ENCODE measurements at regions of chr19 and their contacts with region 1.

Region 1: DNA sequence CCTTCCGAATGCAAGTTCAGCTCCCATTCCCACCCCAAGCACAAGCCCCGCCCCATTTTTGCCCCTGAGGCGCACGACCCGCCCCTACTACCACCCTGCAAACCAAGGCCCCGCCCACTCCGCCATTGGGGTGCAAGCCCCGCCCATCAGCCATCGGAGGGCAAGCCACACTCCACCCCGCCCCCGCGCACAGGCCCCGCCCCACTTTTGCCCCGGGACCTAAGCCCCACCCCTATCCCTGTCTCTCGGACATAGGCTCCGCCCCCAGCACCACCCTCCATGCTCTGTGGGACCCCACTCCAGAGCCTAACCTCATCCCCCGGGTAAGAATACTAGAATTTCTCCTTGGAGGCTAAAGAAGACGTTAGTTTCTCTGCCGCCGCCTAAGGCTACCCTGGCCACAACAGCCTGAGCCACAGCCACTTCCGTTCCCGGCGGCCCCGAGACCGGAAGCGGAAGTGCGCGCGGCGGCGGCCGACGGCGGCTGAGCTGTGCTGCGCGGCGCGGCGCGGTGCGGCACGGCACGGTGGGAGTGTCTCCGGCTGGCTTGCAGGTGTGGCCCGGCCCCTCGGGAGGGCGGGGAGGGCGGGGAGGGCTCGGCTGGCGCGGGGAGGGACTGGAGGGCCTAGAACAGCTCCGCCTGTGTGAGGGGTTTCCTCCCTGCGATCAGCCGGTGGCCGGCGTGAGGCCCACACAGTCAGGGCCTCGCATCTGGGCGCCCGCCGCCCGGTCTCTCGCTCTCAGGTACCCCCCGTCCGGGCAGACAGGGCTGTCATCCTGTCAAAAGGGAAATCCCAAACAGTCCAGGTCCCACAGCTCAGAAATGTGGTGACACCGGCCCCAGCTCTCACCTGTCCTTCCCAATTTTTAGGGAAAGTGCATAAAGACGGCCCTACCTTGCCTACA is at the start of gene ZNF333:
- DNase-seq: peak; percentile 88
- H3K4me3 ChIP-seq: peak within 1 kb of the TSS; percentile 84
- H3K27ac ChIP-seq: peak within 1 kb of the TSS; percentile 94
- H3K27me3 ChIP-seq: no peaks in the 10 kb centered on the region
- CTCF ChIP-seq: no peak

Region 2: GRCh38 chr19:14571695-14572490 is 118.0 kb before region 1 on chr19 and contains the start of gene NDUFB7:
- in situ Hi-C with region 1: loop called (anchors 10 kb)
- DNase-seq: peak; percentile 92
- H3K4me3 ChIP-seq: peak within 1 kb of the TSS; percentile 99
- H3K27ac ChIP-seq: peak within 1 kb of the TSS; percentile 62
- H3K27me3 ChIP-seq: no peaks in the 10 kb centered on the region
- CTCF ChIP-seq: peak; percentile 81

Region 3: GRCh38 chr19:14748601-14749000 is 58.8 kb after region 1 on chr19:
- in situ Hi-C with region 1: no loop called
- DNase-seq: no peak
- H3K4me3 ChIP-seq: no peak overlapping the region
- H3K27ac ChIP-seq: no peak overlapping the region
- H3K27me3 ChIP-seq: no peaks in the 10 kb centered on the region
- CTCF ChIP-seq: no peak